ENCODE measurements at regions of chr12 and their contacts with region 1.

Region 1: DNA sequence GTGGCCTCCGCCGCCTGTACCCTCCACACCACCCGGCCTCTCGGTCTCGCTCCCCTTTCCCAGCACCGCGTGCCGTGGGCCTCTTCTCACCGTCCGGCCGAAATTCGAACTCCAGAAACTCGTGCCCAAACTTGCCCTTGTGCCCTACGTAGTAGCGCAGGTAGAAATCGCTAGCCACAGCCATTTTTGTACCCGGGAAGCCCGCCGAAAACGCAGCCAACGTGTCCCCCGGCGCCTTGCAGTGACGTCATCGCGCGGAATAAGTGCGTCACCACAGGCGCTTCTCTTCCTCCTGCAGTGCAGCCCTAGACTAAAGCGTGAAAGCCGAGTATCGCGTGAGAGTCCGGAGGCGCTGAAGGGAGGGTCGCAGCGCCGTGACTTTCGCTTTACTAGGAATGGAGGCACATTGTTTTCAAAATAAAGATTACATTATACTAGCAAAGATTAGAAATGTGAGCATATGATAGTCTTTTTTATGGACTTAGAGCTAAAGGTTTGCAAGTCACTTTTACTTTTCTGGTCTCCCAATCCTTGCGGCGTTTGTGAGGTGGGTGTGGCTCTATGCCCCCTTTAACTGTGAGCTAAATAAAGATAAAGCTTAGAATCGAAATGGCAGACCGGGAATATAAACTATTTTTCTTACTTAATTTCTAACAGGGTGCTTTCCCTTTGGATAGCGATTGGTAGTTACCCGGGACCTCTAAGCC is at the start of gene MAGOHB:
- DNase-seq: peak; percentile 97 to 100 (median 99)
- ATAC-seq: peak; percentile 90
- H3K4me3 ChIP-seq: peak within 1 kb of the TSS; percentile 74 to 97
- H3K4me3 Mint-ChIP-seq: peak within 1 kb of the TSS; percentile 100
- H3K27ac ChIP-seq: peak within 1 kb of the TSS; percentile 91 to 99
- H3K27ac Mint-ChIP-seq: peak within 1 kb of the TSS; percentile 100
- H3K4me1 ChIP-seq: peaks cover 19% of the 10 kb centered on the region
- H3K4me1 Mint-ChIP-seq: peaks cover 33% of the 10 kb centered on the region
- H3K27me3 ChIP-seq: no peaks in the 10 kb centered on the region
- H3K27me3 Mint-ChIP-seq: no peaks in the 10 kb centered on the region
- CTCF ChIP-seq: no peak
- total RNA-seq, gene MAGOHB: 7.9 to 8.5 TPM

Region 2: GRCh38 chr12:10501031-10501430 is 112.5 kb before region 1 on chr12:
- CTCF ChIA-PET with region 1: no interaction called
- POLR2A ChIA-PET with region 1: no interaction called
- intact Hi-C with region 1: loop called in 1 of 2 experiments (anchors 5 kb)
- DNase-seq: peak in 2 of 9 experiments; percentile 36 to 59
- ATAC-seq: no peak
- H3K4me3 ChIP-seq: no peak overlapping the region
- H3K4me3 Mint-ChIP-seq: peak overlapping the region; percentile 57
- H3K27ac ChIP-seq: no peak overlapping the region
- H3K27ac Mint-ChIP-seq: peak overlapping the region; percentile 82
- H3K4me1 ChIP-seq: peaks cover 56% of the 10 kb centered on the region
- H3K4me1 Mint-ChIP-seq: peaks cover 51% of the 10 kb centered on the region
- H3K27me3 ChIP-seq: no peaks in the 10 kb centered on the region
- H3K27me3 Mint-ChIP-seq: no peaks in the 10 kb centered on the region
- CTCF ChIP-seq: no peak

Region 3: GRCh38 chr12:10562306-10562933 is 51.1 kb before region 1 on chr12:
- CTCF ChIA-PET with region 1: interaction called, 3 read pairs
- POLR2A ChIA-PET with region 1: no interaction called
- intact Hi-C with region 1: loop called (anchors 2 to 5 kb)
- DNase-seq: peak in 4 of 9 experiments; percentile 29 to 79 (median 62)
- ATAC-seq: no peak
- H3K4me3 ChIP-seq: no peak overlapping the region
- H3K4me3 Mint-ChIP-seq: peak overlapping the region; percentile 11
- H3K27ac ChIP-seq: no peak overlapping the region
- H3K27ac Mint-ChIP-seq: peak overlapping the region; percentile 80
- H3K4me1 ChIP-seq: peaks cover 70% of the 10 kb centered on the region
- H3K4me1 Mint-ChIP-seq: peaks cover 83% of the 10 kb centered on the region
- H3K27me3 ChIP-seq: no peaks in the 10 kb centered on the region
- H3K27me3 Mint-ChIP-seq: no peaks in the 10 kb centered on the region
- CTCF ChIP-seq: peak; percentile 98

Region 4: DNA sequence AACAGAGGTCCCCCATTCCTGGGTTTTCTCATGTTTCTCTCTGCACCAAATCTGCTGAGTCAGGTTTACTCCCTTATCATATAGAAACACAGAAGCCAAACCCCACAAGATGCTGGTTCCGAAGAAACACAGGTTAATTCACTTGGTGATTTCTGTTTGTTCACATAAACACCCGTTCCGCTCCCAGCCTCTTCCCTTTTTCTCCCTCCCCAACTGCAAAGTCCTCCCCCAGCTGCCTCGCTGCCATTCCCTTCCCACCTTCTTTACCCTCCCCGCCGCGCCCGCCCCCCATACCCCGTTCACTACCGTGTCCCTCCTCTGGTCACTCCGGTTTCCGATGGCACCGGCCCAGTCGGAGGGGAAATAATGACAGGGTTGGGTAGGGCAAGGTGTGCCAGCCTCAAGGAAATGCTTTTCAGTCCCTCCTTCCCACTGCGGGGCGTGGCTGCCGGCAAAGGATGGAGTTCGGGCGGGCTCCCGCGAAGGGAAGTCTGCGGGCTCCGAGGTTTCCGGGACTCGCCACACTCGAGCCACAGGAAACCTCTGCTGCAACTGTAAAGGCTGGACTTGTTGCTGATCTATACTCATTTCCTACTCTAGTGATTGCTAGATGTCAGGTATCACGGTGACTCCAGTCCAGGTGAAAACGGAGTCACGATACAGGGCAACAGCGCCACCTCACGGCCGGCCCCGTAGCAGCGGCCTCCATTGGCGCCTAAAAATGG is 60.3 kb after region 1 on chr12 and contains the start of gene STYK1:
- CTCF ChIA-PET with region 1: interaction called, 3 read pairs
- POLR2A ChIA-PET with region 1: interaction called, 5 read pairs
- intact Hi-C with region 1: loop called (anchors 1 to 2 kb)
- DNase-seq: peak; percentile 64 to 89 (median 76)
- ATAC-seq: peak; percentile 72
- H3K4me3 ChIP-seq: peak within 1 kb of the TSS; percentile 41 to 57
- H3K4me3 Mint-ChIP-seq: peak within 1 kb of the TSS; percentile 82
- H3K27ac ChIP-seq: peak within 1 kb of the TSS; percentile 50 to 75
- H3K27ac Mint-ChIP-seq: peak within 1 kb of the TSS; percentile 92
- H3K4me1 ChIP-seq: peaks cover 25% of the 10 kb centered on the region
- H3K4me1 Mint-ChIP-seq: peaks cover 43% of the 10 kb centered on the region
- H3K27me3 ChIP-seq: no peaks in the 10 kb centered on the region
- H3K27me3 Mint-ChIP-seq: peaks cover 7% of the 10 kb centered on the region
- CTCF ChIP-seq: peak; percentile 95
- total RNA-seq, gene STYK1: 0.57 to 0.89 TPM

Region 5: GRCh38 chr12:10689146-10689545 is 75.6 kb after region 1 on chr12:
- CTCF ChIA-PET with region 1: no interaction called
- POLR2A ChIA-PET with region 1: no interaction called
- intact Hi-C with region 1: no loop called
- DNase-seq: no peak
- ATAC-seq: no peak
- H3K4me3 ChIP-seq: no peak overlapping the region
- H3K4me3 Mint-ChIP-seq: no peak overlapping the region
- H3K27ac ChIP-seq: no peak overlapping the region
- H3K27ac Mint-ChIP-seq: no peak overlapping the region
- H3K4me1 ChIP-seq: no peaks in the 10 kb centered on the region
- H3K4me1 Mint-ChIP-seq: no peaks in the 10 kb centered on the region
- H3K27me3 ChIP-seq: no peaks in the 10 kb centered on the region
- H3K27me3 Mint-ChIP-seq: peaks cover 6% of the 10 kb centered on the region
- CTCF ChIP-seq: no peak

Region 6: GRCh38 chr12:10749700-10750384 is 136.3 kb after region 1 on chr12:
- CTCF ChIA-PET with region 1: interaction called, 3 read pairs
- POLR2A ChIA-PET with region 1: no interaction called
- intact Hi-C with region 1: loop called (anchors 2 to 5 kb)
- DNase-seq: peak; percentile 43 to 89 (median 71)
- ATAC-seq: peak; percentile 100
- H3K4me3 ChIP-seq: peak overlapping the region in 1 of 2 experiments; percentile 21
- H3K4me3 Mint-ChIP-seq: peak overlapping the region; percentile 36
- H3K27ac ChIP-seq: no peak overlapping the region
- H3K27ac Mint-ChIP-seq: no peak overlapping the region
- H3K4me1 ChIP-seq: peaks cover 4% of the 10 kb centered on the region
- H3K4me1 Mint-ChIP-seq: peaks cover 6% of the 10 kb centered on the region
- H3K27me3 ChIP-seq: no peaks in the 10 kb centered on the region
- H3K27me3 Mint-ChIP-seq: peaks cover 25% of the 10 kb centered on the region
- CTCF ChIP-seq: peak; percentile 97

Region 7: DNA sequence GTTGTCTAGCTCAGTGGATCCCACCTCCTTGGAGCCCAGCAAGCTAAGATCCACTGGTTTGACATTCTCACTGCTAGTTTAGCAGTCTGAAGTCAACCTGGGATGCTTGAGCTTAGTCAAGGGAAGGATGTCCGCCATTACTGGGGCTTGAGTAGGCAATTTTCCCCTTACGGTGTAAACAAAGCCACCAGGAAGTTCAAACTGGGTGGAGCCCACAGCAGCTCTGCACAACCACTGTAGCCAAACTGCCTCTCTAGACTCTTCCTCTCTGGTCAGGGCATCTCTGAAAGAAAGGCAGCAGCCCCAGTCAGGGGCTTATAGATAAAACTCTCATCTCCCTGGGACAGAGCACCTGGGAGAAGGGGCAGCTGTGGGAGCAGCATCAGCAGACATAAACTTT is 495.4 kb after region 1 on chr12:
- CTCF ChIA-PET with region 1: no interaction called
- POLR2A ChIA-PET with region 1: no interaction called
- intact Hi-C with region 1: no loop called
- DNase-seq: no peak
- ATAC-seq: no peak
- H3K4me3 ChIP-seq: no peak overlapping the region
- H3K4me3 Mint-ChIP-seq: no peak overlapping the region
- H3K27ac ChIP-seq: no peak overlapping the region
- H3K27ac Mint-ChIP-seq: peak overlapping the region; percentile 62
- H3K4me1 ChIP-seq: peaks cover 7% of the 10 kb centered on the region
- H3K4me1 Mint-ChIP-seq: peaks cover 39% of the 10 kb centered on the region
- H3K27me3 ChIP-seq: no peaks in the 10 kb centered on the region
- H3K27me3 Mint-ChIP-seq: no peaks in the 10 kb centered on the region
- CTCF ChIP-seq: no peak

Measured in CD8-positive, alpha-beta T cell (primary cell).